CD8-positive, alpha-beta memory T cell (primary cell): ENCODE measurements at regions of chr16 and their contacts with region 1.

Region 1: DNA sequence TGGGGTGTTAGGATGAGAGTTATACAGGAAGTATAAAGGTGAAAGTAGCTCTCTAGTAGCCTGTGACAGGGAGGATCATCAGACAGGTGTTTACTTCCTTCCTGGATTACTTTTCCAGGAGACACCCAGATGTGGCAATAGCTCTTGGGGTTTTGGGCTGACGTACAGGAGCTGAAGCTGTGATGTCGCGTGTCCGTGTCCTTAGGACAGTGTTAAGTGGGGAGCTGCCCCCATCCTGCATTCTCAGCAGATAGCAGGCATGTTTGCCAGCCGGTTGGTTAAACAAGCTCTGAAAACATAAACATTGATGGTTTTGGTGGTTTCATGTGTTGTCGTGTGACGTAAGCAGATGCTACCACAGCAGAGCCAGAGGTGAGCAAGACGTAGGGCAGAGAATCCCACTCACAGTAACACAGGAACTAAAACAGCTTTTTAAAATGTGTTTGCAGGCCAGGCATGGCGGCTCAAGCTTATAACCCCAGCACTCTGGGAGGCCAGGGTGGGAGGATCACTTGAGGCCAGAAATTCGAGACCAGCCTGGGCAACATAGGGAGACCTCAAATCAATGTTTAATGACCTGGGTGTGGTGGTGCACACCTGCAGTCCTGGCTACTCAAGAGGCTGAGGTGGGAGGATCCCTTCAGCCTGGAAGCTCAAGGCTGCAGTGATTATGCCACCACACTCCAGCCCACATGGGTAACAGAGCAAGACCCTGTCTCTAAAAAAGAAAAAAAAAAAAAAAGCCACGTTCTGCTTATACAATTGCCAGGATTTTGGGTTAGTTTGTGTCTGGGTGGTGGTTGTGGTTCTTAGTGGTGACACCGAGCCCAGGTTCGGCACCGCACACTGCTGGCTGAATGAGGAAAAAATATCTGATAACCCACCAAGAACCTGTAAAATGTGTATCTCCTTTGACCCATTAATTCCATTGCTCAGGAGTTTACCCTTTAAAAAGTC is 18.2 kb upstream of the IL17C start:
- DNase-seq: peak; percentile 70 to 96 (median 85)
- H3K4me3 ChIP-seq: no peak overlapping the region
- H3K4me3 Mint-ChIP-seq: peak overlapping the region; percentile 74 to 87 (median 81)
- H3K27ac ChIP-seq: peak overlapping the region; percentile 80
- H3K27ac Mint-ChIP-seq: peak overlapping the region; percentile 97 to 100 (median 100)
- H3K4me1 ChIP-seq: peaks cover 36% of the 10 kb centered on the region
- H3K4me1 Mint-ChIP-seq: peaks cover 31 to 64% (median 41%) of the 10 kb centered on the region in 3 donors
- H3K27me3 ChIP-seq: no peaks in the 10 kb centered on the region
- H3K27me3 Mint-ChIP-seq: peaks cover 0 to 4% of the 10 kb centered on the region in 2 donors

Region 2: GRCh38 chr16:88569985-88570690 is 50.0 kb before region 1 on chr16 and contains the start of gene ZC3H18:
- CTCF ChIA-PET with region 1: interaction called, 10 read pairs
- POLR2A ChIA-PET with region 1: interaction called, 18 read pairs
- DNase-seq: peak; percentile 95 to 99 (median 96)
- H3K4me3 ChIP-seq: peak within 1 kb of the TSS; percentile 60
- H3K4me3 Mint-ChIP-seq: peak within 1 kb of the TSS; percentile 85 to 95 (median 87)
- H3K27ac ChIP-seq: peak within 1 kb of the TSS; percentile 71
- H3K27ac Mint-ChIP-seq: peak within 1 kb of the TSS; percentile 78 to 96 (median 90)
- H3K4me1 ChIP-seq: peaks cover 26% of the 10 kb centered on the region
- H3K4me1 Mint-ChIP-seq: peaks cover 22 to 42% (median 34%) of the 10 kb centered on the region in 3 donors
- H3K27me3 ChIP-seq: no peaks in the 10 kb centered on the region
- H3K27me3 Mint-ChIP-seq: no peaks in the 10 kb centered on the region
- total RNA-seq, gene ZC3H18: 91.4 to 102 TPM

Region 3: GRCh38 chr16:88582912-88583575 is 37.1 kb before region 1 on chr16:
- CTCF ChIA-PET with region 1: no interaction called
- POLR2A ChIA-PET with region 1: interaction called, 14 read pairs
- DNase-seq: no peak
- H3K4me3 ChIP-seq: no peak overlapping the region
- H3K4me3 Mint-ChIP-seq: peak overlapping the region in 1 of 7 donors; percentile 23
- H3K27ac ChIP-seq: no peak overlapping the region
- H3K27ac Mint-ChIP-seq: peak overlapping the region in 4 of 8 donors; percentile 21 to 54 (median 52)
- H3K4me1 ChIP-seq: no peaks in the 10 kb centered on the region
- H3K4me1 Mint-ChIP-seq: peaks cover 37 to 65% (median 55%) of the 10 kb centered on the region in 3 donors
- H3K27me3 ChIP-seq: no peaks in the 10 kb centered on the region
- H3K27me3 Mint-ChIP-seq: no peaks in the 10 kb centered on the region

Region 4: GRCh38 chr16:88633684-88634140 is 13.6 kb after region 1 on chr16:
- CTCF ChIA-PET with region 1: interaction called, 21 read pairs
- POLR2A ChIA-PET with region 1: interaction called, 29 read pairs
- DNase-seq: peak; percentile 44 to 83 (median 69)
- H3K4me3 ChIP-seq: peak overlapping the region; percentile 61
- H3K4me3 Mint-ChIP-seq: peak overlapping the region; percentile 75 to 90 (median 82)
- H3K27ac ChIP-seq: peak overlapping the region; percentile 75
- H3K27ac Mint-ChIP-seq: peak overlapping the region; percentile 83 to 97 (median 92)
- H3K4me1 ChIP-seq: peaks cover 34% of the 10 kb centered on the region
- H3K4me1 Mint-ChIP-seq: peaks cover 30 to 43% (median 31%) of the 10 kb centered on the region in 3 donors
- H3K27me3 ChIP-seq: no peaks in the 10 kb centered on the region
- H3K27me3 Mint-ChIP-seq: no peaks in the 10 kb centered on the region

Region 5: GRCh38 chr16:88639231-88640038 is 19.3 kb after region 1 on chr16:
- CTCF ChIA-PET with region 1: interaction called, 17 read pairs
- POLR2A ChIA-PET with region 1: interaction called, 29 read pairs
- DNase-seq: no peak
- H3K4me3 ChIP-seq: peak overlapping the region; percentile 26
- H3K4me3 Mint-ChIP-seq: peak overlapping the region in 3 of 7 donors; percentile 44 to 69 (median 50)
- H3K27ac ChIP-seq: no peak overlapping the region
- H3K27ac Mint-ChIP-seq: peak overlapping the region in 3 of 8 donors; percentile 8 to 83 (median 49)
- H3K4me1 ChIP-seq: peaks cover 44% of the 10 kb centered on the region
- H3K4me1 Mint-ChIP-seq: peaks cover 37 to 66% (median 41%) of the 10 kb centered on the region in 3 donors
- H3K27me3 ChIP-seq: no peaks in the 10 kb centered on the region
- H3K27me3 Mint-ChIP-seq: peaks cover 0 to 7% of the 10 kb centered on the region in 2 donors

Region 6: GRCh38 chr16:88657371-88657770 is 37.2 kb after region 1 on chr16:
- CTCF ChIA-PET with region 1: no interaction called
- POLR2A ChIA-PET with region 1: no interaction called
- DNase-seq: no peak
- H3K4me3 ChIP-seq: no peak overlapping the region
- H3K4me3 Mint-ChIP-seq: no peak overlapping the region
- H3K27ac ChIP-seq: no peak overlapping the region
- H3K27ac Mint-ChIP-seq: no peak overlapping the region
- H3K4me1 ChIP-seq: peaks cover 6% of the 10 kb centered on the region
- H3K4me1 Mint-ChIP-seq: peaks cover 10 to 15% (median 14%) of the 10 kb centered on the region in 3 donors
- H3K27me3 ChIP-seq: no peaks in the 10 kb centered on the region
- H3K27me3 Mint-ChIP-seq: no peaks in the 10 kb centered on the region

Region 7: GRCh38 chr16:88700636-88701482 is 80.7 kb after region 1 on chr16:
- CTCF ChIA-PET with region 1: interaction called, 3 read pairs
- POLR2A ChIA-PET with region 1: interaction called, 26 read pairs
- DNase-seq: peak; percentile 93 to 98 (median 96)
- H3K4me3 ChIP-seq: peak overlapping the region; percentile 97
- H3K4me3 Mint-ChIP-seq: peak overlapping the region; percentile 94 to 97 (median 96)
- H3K27ac ChIP-seq: peak overlapping the region; percentile 93
- H3K27ac Mint-ChIP-seq: peak overlapping the region; percentile 92 to 100 (median 99)
- H3K4me1 ChIP-seq: peaks cover 78% of the 10 kb centered on the region
- H3K4me1 Mint-ChIP-seq: peaks cover 39 to 64% (median 55%) of the 10 kb centered on the region in 3 donors
- H3K27me3 ChIP-seq: no peaks in the 10 kb centered on the region
- H3K27me3 Mint-ChIP-seq: peaks cover 0 to 4% of the 10 kb centered on the region in 2 donors

Region 8: GRCh38 chr16:88727871-88728270 is 107.7 kb after region 1 on chr16:
- CTCF ChIA-PET with region 1: no interaction called
- POLR2A ChIA-PET with region 1: no interaction called
- DNase-seq: no peak
- H3K4me3 ChIP-seq: no peak overlapping the region
- H3K4me3 Mint-ChIP-seq: no peak overlapping the region
- H3K27ac ChIP-seq: no peak overlapping the region
- H3K27ac Mint-ChIP-seq: peak overlapping the region in 1 of 8 donors; percentile 33
- H3K4me1 ChIP-seq: no peaks in the 10 kb centered on the region
- H3K4me1 Mint-ChIP-seq: peaks cover 0 to 2% (median 0%) of the 10 kb centered on the region in 3 donors
- H3K27me3 ChIP-seq: no peaks in the 10 kb centered on the region
- H3K27me3 Mint-ChIP-seq: no peaks in the 10 kb centered on the region